Ovary (tissue), 10 donors: ENCODE measurements at regions of chr19 and their contacts with region 1.

Region 1: GRCh38 chr19:49502866-49503581 is 6.8 kb downstream of the RPS11 start:
- DNase-seq: peak in 4 of 5 donors; percentile 56 to 72 (median 64)
- H3K4me3 ChIP-seq: no peak overlapping the region
- H3K27ac ChIP-seq: no peak overlapping the region
- H3K4me1 ChIP-seq: no peaks in the 10 kb centered on the region
- H3K27me3 ChIP-seq: no peaks in the 10 kb centered on the region
- CTCF ChIP-seq: peak; percentile 51 to 81 (median 74)
- EP300 ChIP-seq: no peak
- POLR2A ChIP-seq: no peak

Region 2: GRCh38 chr19:49533551-49534488 is 30.8 kb after region 1 on chr19:
- intact Hi-C with region 1: no loop called
- DNase-seq: peak; percentile 72 to 90 (median 87)
- H3K4me3 ChIP-seq: peak overlapping the region; percentile 61
- H3K27ac ChIP-seq: peak overlapping the region; percentile 4 to 12
- H3K4me1 ChIP-seq: peaks cover 9% of the 10 kb centered on the region
- H3K27me3 ChIP-seq: no peaks in the 10 kb centered on the region
- CTCF ChIP-seq: no peak
- EP300 ChIP-seq: no peak
- POLR2A ChIP-seq: no peak

Region 3: DNA sequence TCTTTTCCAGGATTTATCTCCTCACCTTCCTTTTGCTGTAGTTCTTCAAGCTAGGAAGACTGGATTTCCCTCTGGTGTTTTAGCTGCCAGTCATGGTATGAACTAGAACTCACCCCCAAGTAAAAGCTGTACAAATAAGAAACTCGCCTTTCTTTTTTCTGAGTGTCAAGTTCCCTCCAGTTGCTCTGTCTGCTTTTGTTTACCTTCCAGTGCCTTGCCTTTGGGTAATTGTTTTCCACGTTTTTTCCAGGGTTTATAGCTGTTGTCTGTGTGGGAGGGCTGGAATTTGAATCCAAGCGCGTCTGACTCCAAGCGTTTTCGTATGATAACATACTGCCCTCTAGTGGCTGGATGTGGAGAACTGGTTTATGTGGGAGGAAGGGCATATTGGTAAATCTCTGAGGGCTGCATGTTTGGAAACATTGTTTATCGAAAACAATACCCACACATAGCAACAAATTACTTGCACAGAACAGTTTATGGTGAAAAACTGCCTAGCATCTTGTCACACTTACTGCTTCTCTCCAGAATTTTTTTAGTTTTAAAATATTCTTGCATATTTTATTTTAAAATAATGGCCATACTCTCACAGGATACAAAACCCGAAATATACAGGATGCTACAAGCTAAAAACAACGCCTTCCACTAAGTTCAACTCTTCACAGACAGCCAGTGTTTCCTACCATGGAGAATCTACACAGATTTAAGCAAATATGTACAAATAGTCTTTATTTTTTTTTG is 44.0 kb after region 1 on chr19:
- intact Hi-C with region 1: loop called in 3 of 4 experiments (anchors 2 to 5 kb)
- DNase-seq: peak in 4 of 5 donors; percentile 65 to 85 (median 74)
- H3K4me3 ChIP-seq: no peak overlapping the region
- H3K27ac ChIP-seq: no peak overlapping the region
- H3K4me1 ChIP-seq: no peaks in the 10 kb centered on the region
- H3K27me3 ChIP-seq: no peaks in the 10 kb centered on the region
- CTCF ChIP-seq: peak; percentile 60 to 96 (median 90)
- EP300 ChIP-seq: no peak
- POLR2A ChIP-seq: no peak

Region 4: DNA sequence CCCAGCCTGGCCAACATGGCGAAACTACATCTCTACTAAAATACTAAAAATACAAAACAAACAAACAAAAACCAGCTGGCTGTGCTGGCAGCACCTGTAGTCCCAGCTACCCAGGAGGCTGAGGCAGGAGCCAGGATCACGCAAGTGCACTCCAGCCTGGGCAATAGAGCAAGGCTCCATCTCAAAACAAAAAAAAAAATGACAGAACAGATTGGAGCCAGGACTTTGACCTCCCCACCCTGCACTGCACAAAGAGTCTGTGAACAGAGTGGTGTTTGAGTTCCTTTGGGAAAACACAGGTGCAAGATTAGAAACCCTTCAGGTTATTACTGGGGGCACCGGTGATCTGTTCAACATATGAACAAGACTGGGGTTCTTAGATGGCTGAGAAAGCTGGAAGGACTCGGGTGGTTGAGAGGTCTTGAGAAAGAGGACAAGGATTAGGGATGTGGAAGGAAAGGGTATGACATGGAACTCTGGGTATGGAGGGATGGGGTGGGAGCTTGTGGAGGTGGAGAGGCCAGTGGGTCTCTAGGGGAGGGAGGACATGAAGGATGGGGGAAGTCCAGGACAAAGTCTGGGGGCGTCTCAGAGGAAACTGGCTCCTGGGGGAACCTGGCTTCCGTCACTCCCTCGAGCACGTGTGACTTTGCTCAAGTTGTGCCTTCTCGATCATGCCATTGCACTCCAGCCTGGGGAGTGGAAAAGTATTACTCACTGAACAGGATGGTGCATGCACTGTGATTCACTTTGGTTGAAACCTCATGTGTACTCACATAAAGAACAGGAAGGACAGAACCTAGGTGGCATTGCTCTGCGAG is 50.6 kb after region 1 on chr19:
- intact Hi-C with region 1: loop called in 1 of 4 experiments (anchors 5 kb)
- DNase-seq: no peak
- H3K4me3 ChIP-seq: no peak overlapping the region
- H3K27ac ChIP-seq: no peak overlapping the region
- H3K4me1 ChIP-seq: peaks cover 2% of the 10 kb centered on the region
- H3K27me3 ChIP-seq: no peaks in the 10 kb centered on the region
- CTCF ChIP-seq: no peak
- EP300 ChIP-seq: no peak
- POLR2A ChIP-seq: no peak